Left ventricle myocardium superior (tissue), 1 donor: ENCODE measurements at regions of chr20 and their contacts with region 1.

Region 1: GRCh38 chr20:36144336-36144735 is 10.2 kb upstream of the EPB41L1 start:
- DNase-seq: no peak
- ATAC-seq: no peak

Region 2: GRCh38 chr20:35994994-35995453 is 149.3 kb before region 1 on chr20:
- intact Hi-C with region 1: loop called (anchors 2 kb)
- DNase-seq: peak; percentile 91
- ATAC-seq: peak; percentile 97

Region 3: GRCh38 chr20:36035745-36036144 is 108.6 kb before region 1 on chr20:
- intact Hi-C with region 1: no loop called
- DNase-seq: no peak
- ATAC-seq: no peak

Region 4: GRCh38 chr20:36173451-36173933 is 29.2 kb after region 1 on chr20:
- intact Hi-C with region 1: no loop called
- DNase-seq: no peak
- ATAC-seq: peak; percentile 62

Region 5: DNA sequence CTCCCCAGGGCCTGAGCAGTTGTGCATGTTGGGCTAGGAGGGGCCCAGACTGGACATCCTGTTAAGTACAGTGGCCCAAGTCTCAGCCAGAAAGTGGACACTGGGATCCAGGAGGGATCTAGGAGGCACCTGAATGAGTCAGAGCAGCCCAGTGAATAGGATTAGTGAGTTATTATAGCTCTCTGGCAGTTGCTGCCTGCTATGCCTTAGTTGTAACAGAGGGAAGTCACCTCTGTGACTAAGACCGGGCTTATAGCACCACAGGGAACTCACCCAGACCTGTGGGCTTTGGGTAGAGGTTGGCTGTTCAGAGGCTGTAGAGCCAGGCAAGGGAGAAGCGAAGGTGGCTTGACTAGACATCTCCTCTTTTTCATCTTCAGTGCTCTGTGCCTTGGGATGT is 52.9 kb after region 1 on chr20:
- intact Hi-C with region 1: no loop called
- DNase-seq: no peak
- ATAC-seq: no peak